Brain microvascular endothelial cell (primary cell): ENCODE measurements at regions of chr1 and their contacts with region 1.

Region 1: GRCh38 chr1:98053471-98054366 is 132.9 kb upstream of the DPYD start:
- DNase-seq: peak; percentile 54
- H3K4me3 ChIP-seq: peak overlapping the region; percentile 56
- H3K27ac ChIP-seq: peak overlapping the region; percentile 78
- H3K27me3 ChIP-seq: no peaks in the 10 kb centered on the region
- CTCF ChIP-seq: peak; percentile 58

Region 2: DNA sequence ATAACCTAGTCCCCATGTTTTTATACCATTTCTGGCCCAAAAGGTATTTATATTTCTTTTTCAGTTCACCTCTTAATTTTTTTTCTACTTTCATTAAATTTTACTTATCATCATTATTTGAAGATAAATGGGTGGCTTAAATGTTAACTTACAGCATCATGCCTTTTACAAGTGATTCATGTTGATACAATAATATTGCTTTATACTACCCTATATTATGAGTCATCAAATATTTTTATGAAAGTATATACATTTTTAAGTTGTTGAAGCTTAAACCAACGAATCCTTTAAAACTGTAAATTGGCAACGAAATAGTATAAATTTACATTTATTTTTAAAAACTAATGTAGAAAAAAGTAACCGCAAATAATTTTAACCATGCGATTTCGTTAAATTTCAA is 340.7 kb before region 1 on chr1:
- in situ Hi-C with region 1: no loop called
- DNase-seq: no peak
- H3K4me3 ChIP-seq: no peak overlapping the region
- H3K27ac ChIP-seq: no peak overlapping the region
- H3K27me3 ChIP-seq: no peaks in the 10 kb centered on the region
- CTCF ChIP-seq: no peak

Region 3: GRCh38 chr1:98468111-98468717 is 414.5 kb after region 1 on chr1:
- in situ Hi-C with region 1: loop called (anchors 25 kb)
- DNase-seq: peak; percentile 59
- H3K4me3 ChIP-seq: no peak overlapping the region
- H3K27ac ChIP-seq: no peak overlapping the region
- H3K27me3 ChIP-seq: no peaks in the 10 kb centered on the region
- CTCF ChIP-seq: peak; percentile 62